WTC11 (cell line): ENCODE measurements at regions of chr4 and their contacts with region 1.

Region 1: DNA sequence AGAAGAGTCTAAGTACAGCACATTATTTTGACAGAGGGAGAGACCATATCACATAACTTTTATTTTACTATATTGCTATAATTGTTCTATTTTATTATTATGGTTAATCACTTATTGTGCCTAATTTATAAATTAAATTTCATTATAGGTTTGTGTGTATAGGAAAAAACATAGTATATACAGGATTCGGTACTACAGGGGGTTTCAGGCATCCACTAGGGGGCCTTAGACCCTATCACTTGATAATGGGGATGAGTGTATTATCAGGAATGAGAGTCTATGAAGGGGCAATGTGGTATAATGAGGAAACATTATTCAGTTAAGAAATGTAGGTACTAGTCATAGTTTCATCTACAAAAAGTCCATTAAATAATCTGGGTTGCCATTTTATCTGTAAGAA is 833.1 kb downstream of the C4orf33 start:
- DNase-seq: peak; percentile 32
- ATAC-seq: peak; percentile 84
- H3K4me3 Mint-ChIP-seq: no peak overlapping the region
- H3K27ac Mint-ChIP-seq: no peak overlapping the region
- H3K4me1 Mint-ChIP-seq: peaks cover 41% of the 10 kb centered on the region
- H3K27me3 Mint-ChIP-seq: no peaks in the 10 kb centered on the region
- CTCF ChIP-seq: peak; percentile 37; the same call in 1 of the 2 replicates

Region 2: DNA sequence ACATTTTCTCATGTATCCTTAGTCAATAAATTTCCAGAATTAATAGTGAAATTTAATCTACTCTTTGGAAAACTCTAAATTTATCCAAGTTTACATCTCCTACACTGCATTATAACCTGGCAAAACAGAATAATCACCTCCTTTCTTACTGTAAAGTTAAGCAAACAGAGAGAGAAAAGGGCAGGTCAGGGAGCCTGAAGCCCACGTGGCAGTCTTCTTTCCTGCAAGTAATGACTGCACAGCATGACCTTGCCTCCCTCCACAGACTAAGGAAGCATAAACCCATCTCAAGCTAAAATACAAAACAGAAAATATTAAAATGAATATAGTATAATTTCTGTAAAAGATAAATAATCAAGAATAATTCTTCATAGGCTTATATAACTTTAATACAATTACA is 319.9 kb after region 1 on chr4:
- CTCF ChIA-PET with region 1: no interaction called
- POLR2A ChIA-PET with region 1: interaction called, 10 read pairs
- DNase-seq: peak; percentile 14
- ATAC-seq: peak; percentile 91
- H3K4me3 Mint-ChIP-seq: no peak overlapping the region
- H3K27ac Mint-ChIP-seq: peak overlapping the region; percentile 41; the same call in 1 of the 2 replicates
- H3K4me1 Mint-ChIP-seq: peaks cover 8% of the 10 kb centered on the region
- H3K27me3 Mint-ChIP-seq: no peaks in the 10 kb centered on the region
- CTCF ChIP-seq: no peak